ENCODE measurements at regions of chr4 and their contacts with region 1.

Region 1: DNA sequence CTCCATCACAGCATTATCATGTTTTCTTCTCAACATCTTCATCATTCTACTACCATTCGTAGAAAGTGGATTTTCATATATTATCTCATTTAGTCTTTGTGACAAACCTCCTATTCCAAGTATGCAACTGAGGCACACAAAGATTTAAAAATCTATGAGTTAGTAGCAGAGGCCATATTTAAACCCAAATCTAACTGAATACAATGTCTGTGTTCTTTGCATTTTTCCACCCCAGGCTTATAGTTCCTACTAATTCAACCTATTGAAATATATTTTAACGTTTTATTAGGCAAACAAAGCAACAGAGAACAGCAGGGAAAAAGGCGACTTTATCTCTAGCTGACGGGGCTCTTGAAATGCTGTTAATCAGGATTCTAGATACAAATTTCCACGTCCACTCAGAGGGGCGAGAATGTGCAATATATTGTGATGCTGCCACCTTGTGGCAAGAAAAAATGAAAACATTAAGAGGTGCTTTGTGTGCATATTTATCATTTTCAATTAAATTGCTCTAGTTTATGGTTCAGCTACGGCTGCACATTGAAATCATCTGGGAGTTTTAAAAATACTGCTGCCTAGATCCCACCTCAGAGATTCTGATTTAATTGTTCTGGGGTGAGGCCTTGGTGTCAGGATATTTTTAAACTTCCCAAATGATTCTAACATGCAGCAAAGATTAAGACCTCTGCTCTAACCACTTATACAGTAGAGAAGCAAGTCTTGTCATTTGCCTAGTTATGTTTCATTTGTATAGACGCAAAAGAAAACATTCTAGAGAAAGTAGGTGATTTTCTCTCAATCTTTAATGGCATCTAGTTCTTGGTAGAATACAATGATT is 315.9 kb downstream of the MAPK10 start:
- DNase-seq: no peak
- ATAC-seq: peak; percentile 59 to 62

Region 2: DNA sequence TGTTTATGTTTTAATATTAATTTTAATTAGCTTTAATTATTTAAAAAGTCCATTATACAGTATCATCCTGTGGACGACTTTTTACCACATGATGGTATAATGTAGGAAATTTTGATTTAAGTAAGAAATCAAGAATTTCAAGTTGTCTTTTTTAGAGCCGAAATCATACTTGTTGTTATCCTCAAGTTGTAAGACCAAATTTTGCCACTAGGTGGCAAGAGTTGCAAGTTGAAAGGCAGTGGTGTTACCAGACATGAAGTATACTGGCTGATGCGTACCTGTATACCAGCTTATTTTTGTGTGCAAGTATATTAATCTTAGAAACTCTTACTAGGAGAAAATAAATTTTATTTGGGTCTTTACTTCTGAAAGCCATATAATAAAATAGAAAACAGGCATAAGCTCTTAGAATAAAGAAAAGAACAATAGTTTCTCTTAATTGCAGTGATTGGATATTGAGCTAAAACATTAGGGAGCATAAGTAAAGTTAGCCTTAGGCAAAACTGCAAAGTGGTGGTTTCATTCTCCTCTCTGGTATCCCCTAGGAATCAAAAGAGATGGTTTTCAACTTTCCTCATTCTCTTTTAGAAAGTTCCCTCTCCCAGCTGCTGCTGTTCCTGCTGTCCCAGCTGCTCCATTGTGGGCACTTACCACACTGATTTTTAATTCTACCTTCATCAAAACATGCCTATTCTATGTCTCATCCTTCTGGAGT is 959.4 kb before region 1 on chr4:
- intact Hi-C with region 1: loop called in 1 of 2 experiments (anchors 10 kb)
- DNase-seq: no peak
- ATAC-seq: peak in 1 of 2 donors; percentile 66

Region 3: GRCh38 chr4:85147439-85148076 is 896.4 kb before region 1 on chr4:
- intact Hi-C with region 1: loop called in 1 of 2 experiments (anchors 5 kb)
- DNase-seq: peak; percentile 47
- ATAC-seq: peak; percentile 83 to 85

Region 4: GRCh38 chr4:85756938-85757337 is 287.0 kb before region 1 on chr4:
- intact Hi-C with region 1: loop called in 1 of 2 experiments (anchors 10 kb)
- DNase-seq: no peak
- ATAC-seq: peak; percentile 44 to 75

Region 5: GRCh38 chr4:85790582-85790981 is 253.4 kb before region 1 on chr4:
- intact Hi-C with region 1: loop called in 1 of 2 experiments (anchors 10 kb)
- DNase-seq: no peak
- ATAC-seq: peak in 1 of 2 donors; percentile 36

Region 6: DNA sequence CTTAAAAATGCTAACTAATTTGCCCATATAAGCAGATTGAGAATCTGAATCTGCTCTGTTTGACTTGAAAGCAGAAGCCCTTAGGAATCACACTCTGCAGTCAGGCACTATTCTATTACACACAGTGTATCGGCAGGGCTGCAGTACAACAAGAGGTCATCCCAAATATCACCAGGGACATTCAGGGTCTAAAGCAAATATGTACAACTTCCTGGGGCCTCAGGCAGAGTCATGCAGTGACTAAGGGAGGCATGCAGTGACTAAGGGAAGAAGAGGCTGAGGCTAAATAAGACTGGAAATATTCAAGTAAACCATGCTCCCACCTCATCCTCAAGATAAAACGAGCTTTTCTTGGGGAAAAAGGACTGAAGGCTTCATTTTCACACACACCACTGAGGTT is 295.0 kb after region 1 on chr4:
- intact Hi-C with region 1: no loop called
- DNase-seq: no peak
- ATAC-seq: peak; percentile 74 to 96